Dorsolateral prefrontal cortex (tissue), 120 donors: ENCODE measurements at regions of chr10 and their contacts with region 1.

Region 1: GRCh38 chr10:83310688-83311087 is 828.6 kb upstream of the GHITM start:
- DNase-seq: no peak
- H3K4me3 ChIP-seq: no peak overlapping the region
- H3K27ac ChIP-seq: no peak overlapping the region
- H3K27me3 ChIP-seq: no peaks in the 10 kb centered on the region
- CTCF ChIP-seq: no peak

Region 2: DNA sequence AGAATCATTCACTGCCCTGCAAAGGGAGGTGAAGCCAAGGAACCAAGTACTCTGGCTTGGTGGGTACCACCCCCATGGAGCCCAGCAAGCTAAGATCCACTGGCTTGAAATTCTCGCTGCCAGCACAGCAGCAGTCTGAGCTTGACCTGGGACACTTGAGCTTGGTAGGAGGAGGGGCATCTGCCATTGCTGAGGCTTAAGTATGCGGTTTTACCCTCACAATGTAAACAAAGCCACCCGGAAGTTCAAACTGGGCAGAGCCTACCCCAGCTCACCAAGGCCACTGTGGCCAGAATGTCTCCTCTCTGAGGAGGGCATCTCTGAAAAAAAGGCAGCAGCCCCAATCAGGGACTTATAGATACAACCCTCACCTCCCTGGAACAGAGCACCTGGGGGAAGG is 221.4 kb before region 1 on chr10:
- intact Hi-C with region 1: no loop called
- DNase-seq: no peak
- H3K4me3 ChIP-seq: no peak overlapping the region
- H3K27ac ChIP-seq: no peak overlapping the region
- H3K27me3 ChIP-seq: no peaks in the 10 kb centered on the region
- CTCF ChIP-seq: no peak

Region 3: DNA sequence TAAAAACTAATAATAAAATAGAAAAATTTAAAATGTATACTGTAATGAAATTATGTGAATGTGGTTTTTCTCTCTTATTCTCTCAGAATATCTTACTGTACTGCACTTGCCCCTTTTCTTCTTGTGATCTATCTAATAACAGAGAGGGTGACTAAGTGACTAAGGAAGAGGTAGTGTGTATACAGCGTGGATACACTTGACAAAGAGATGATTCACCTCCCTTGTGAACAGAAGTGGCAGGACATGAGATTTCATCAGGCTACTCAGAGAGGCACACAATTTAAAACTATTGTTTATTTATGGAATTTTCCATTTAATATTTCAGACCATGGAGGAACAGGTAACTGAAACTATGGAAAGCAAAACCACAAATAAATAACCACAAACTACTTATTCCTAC is 22.0 kb after region 1 on chr10:
- intact Hi-C with region 1: loop called in 1 of 2 experiments (anchors 2 kb)
- DNase-seq: no peak
- H3K4me3 ChIP-seq: no peak overlapping the region
- H3K27ac ChIP-seq: no peak overlapping the region
- H3K27me3 ChIP-seq: no peaks in the 10 kb centered on the region
- CTCF ChIP-seq: no peak